ENCODE measurements at regions of chr3 and their contacts with region 1.

Region 1: GRCh38 chr3:14402304-14402811 is at the start of gene SLC6A6:
- DNase-seq: peak; percentile 91
- ATAC-seq: peak; percentile 80
- H3K4me3 Mint-ChIP-seq: peak within 1 kb of the TSS; percentile 94
- H3K27ac Mint-ChIP-seq: peak within 1 kb of the TSS; percentile 95
- H3K4me1 Mint-ChIP-seq: peaks cover 62% of the 10 kb centered on the region
- H3K27me3 Mint-ChIP-seq: no peaks in the 10 kb centered on the region
- CTCF ChIP-seq: no peak
- total RNA-seq, gene SLC6A6: 67.2 and 67.3 TPM in 2 replicates

Region 2: DNA sequence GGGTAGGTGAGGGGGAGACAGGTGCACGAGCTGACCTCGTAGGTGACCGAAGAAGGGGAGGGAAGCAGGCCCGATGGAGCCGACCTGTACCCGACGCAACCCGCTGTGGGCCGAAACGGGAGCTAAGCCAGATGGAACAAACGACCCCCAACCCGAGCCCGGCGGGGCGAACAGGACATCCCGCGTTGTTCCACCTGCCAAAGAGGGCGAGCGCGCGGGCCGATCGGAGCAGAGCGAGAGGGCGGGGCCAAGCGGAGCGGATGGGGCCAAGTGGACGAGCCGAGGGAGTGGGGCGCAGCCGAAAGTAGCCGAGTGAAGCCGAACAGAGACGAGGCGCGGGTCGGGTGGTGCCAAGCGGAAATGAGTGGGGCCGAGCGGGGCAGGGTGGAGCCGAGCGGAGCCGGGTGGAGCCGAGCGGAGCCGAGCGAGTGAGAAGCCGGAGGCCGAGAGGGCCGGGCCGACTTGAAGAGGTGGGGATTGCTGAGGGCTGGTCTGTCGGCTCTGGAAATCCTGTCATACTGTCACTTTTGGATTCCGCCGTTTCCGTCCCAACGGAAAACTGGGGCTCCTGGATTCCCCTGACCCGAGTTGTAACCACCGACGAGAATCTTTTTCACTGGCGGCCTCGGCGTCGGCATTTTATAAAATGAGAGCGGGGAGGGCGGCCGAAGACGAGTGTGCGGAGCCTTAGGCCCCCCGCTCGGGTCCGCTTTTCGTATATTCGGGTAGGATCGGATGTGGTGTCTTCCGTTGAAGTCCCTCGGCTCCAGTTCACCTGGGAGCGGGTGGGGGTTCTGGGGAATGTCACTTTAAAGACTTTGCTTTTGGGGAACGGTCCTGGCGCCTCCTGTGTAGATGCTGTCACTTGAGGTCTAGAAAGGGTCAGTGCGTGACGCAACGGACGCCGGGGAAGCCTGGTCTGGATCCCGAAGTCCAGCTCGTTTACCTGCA is 506.9 kb before region 1 on chr3:
- CTCF ChIA-PET with region 1: interaction called, 4 read pairs
- POLR2A ChIA-PET with region 1: no interaction called
- intact Hi-C with region 1: loop called (anchors 5 kb)
- DNase-seq: peak; percentile 86
- ATAC-seq: peak; percentile 99
- H3K4me3 Mint-ChIP-seq: peak overlapping the region; percentile 89
- H3K27ac Mint-ChIP-seq: peak overlapping the region; percentile 78
- H3K4me1 Mint-ChIP-seq: peaks cover 41% of the 10 kb centered on the region
- H3K27me3 Mint-ChIP-seq: peaks cover 5% of the 10 kb centered on the region
- CTCF ChIP-seq: no peak

Region 3: DNA sequence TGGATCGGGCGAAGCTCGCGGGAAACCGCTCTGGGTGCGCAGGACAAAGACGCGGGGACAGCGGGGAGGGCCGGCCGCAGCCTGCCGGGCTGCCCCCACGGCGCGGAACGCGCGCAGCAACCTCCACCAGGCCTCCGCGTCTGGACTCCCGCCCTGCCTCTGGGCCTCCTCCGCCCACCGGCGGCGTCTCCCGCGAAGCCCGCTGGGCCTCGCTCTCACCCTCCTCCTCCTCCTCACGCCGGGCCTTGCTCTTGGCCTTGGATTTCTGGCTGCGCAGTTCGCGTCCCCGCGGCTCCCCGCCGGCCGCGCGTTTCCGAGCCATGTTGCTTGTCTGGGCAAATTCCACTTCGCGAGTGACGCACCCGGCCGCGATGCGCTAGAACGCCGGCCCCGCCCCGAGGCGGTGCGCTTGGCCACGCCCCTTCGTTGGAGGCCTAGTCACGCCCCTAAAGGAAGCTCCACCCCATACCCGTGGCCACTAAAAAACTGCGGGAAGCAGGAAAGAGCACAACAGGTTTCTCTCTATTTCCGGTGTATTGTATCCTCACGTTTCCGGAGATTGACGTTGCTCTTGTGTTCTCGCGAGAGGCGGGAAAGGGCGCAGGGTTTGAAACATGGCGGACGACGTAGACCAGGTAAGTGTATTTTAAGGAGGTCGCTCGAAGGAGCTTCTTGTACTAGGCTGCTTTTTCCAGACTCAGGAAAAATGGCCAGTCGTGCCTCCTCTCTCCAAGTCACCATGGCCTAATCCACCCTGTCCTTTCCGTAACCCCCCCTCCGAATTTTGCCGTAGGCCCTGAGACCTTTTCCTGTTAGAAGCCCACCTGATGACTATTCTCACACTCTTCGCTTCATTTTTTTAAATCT is 223.9 kb before region 1 on chr3 and contains the starts of genes LSM3 and XPC:
- CTCF ChIA-PET with region 1: no interaction called
- POLR2A ChIA-PET with region 1: interaction called, 14 read pairs
- intact Hi-C with region 1: loop called (anchors 1 kb)
- DNase-seq: peak; percentile 98
- ATAC-seq: peak; percentile 96
- H3K4me3 Mint-ChIP-seq: peak within 1 kb of the TSS; percentile 97
- H3K27ac Mint-ChIP-seq: peak within 1 kb of the TSS; percentile 98
- H3K4me1 Mint-ChIP-seq: peaks cover 63% of the 10 kb centered on the region
- H3K27me3 Mint-ChIP-seq: no peaks in the 10 kb centered on the region
- CTCF ChIP-seq: no peak
- total RNA-seq, gene LSM3: 12.9 and 14.2 TPM in 2 replicates
- total RNA-seq, gene XPC: 35.4 and 35.6 TPM in 2 replicates

Region 4: GRCh38 chr3:14413381-14414071 is 11.2 kb after region 1 on chr3:
- CTCF ChIA-PET with region 1: no interaction called
- POLR2A ChIA-PET with region 1: interaction called, 377 read pairs
- intact Hi-C with region 1: loop called (anchors 1 kb)
- DNase-seq: no peak
- ATAC-seq: peak; percentile 75
- H3K4me3 Mint-ChIP-seq: no peak overlapping the region
- H3K27ac Mint-ChIP-seq: peak overlapping the region; percentile 24
- H3K4me1 Mint-ChIP-seq: peaks cover 53% of the 10 kb centered on the region
- H3K27me3 Mint-ChIP-seq: no peaks in the 10 kb centered on the region
- CTCF ChIP-seq: no peak

Region 5: GRCh38 chr3:14431892-14432834 is 29.8 kb after region 1 on chr3:
- CTCF ChIA-PET with region 1: interaction called, 24 read pairs
- POLR2A ChIA-PET with region 1: interaction called, 377 read pairs
- intact Hi-C with region 1: loop called (anchors 1 kb)
- DNase-seq: peak; percentile 76
- ATAC-seq: peak; percentile 75
- H3K4me3 Mint-ChIP-seq: peak overlapping the region; percentile 72
- H3K27ac Mint-ChIP-seq: peak overlapping the region; percentile 94
- H3K4me1 Mint-ChIP-seq: peaks cover 90% of the 10 kb centered on the region
- H3K27me3 Mint-ChIP-seq: no peaks in the 10 kb centered on the region
- CTCF ChIP-seq: no peak

Region 6: GRCh38 chr3:14461748-14462324 is 59.5 kb after region 1 on chr3:
- CTCF ChIA-PET with region 1: interaction called, 22 read pairs
- POLR2A ChIA-PET with region 1: interaction called, 5 read pairs
- intact Hi-C with region 1: loop called (anchors 1 kb)
- DNase-seq: peak; percentile 25
- ATAC-seq: peak; percentile 70
- H3K4me3 Mint-ChIP-seq: no peak overlapping the region
- H3K27ac Mint-ChIP-seq: no peak overlapping the region
- H3K4me1 Mint-ChIP-seq: peaks cover 7% of the 10 kb centered on the region
- H3K27me3 Mint-ChIP-seq: no peaks in the 10 kb centered on the region
- CTCF ChIP-seq: no peak

Region 7: DNA sequence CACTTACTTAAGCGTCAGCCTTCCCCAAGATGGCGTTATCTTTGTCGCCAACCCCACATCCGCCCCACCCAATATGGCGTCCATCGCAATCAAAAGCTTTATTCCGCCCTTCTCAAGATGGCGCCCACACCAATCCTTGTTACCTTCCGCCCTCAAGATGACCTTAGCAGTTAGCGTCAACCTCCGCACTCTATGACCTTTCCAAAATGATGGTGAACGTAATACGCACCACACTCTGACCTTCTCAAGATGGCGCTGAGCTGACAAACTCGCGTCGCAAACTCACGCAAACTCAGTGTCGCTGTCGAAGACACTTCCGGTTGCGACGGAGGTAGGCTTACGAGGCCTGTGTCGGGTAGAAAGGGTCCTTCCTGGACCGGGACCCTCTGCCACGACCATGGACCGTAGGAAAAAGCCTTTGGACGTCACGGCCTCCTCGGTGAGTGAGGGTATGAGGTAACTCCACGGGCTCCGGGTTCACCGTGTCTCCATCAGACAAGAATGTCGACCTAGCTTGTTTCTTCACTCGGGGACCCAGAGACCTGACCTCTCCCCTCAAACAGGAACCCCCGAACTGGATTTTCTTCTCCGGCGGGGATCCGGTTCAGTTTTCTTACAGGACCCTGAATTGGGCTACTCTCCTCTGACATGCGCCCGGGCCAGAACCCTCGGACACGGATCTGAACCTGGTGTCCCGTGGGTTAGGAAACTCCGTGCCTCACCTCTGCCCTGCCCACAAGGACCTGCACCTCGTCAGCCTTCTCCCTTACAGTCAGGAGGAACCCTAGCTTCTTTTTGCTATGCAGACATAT is 249.3 kb after region 1 on chr3 and contains the start of gene CCDC174:
- CTCF ChIA-PET with region 1: no interaction called
- POLR2A ChIA-PET with region 1: interaction called, 10 read pairs
- intact Hi-C with region 1: loop called (anchors 1 kb)
- DNase-seq: peak; percentile 86
- ATAC-seq: peak; percentile 97
- H3K4me3 Mint-ChIP-seq: peak within 1 kb of the TSS; percentile 95
- H3K27ac Mint-ChIP-seq: peak within 1 kb of the TSS; percentile 93
- H3K4me1 Mint-ChIP-seq: peaks cover 34% of the 10 kb centered on the region
- H3K27me3 Mint-ChIP-seq: no peaks in the 10 kb centered on the region
- CTCF ChIP-seq: no peak
- total RNA-seq, gene CCDC174: 30.2 and 32.4 TPM in 2 replicates